K562 (cell line): ENCODE measurements at regions of chr12 and their contacts with region 1.

Region 1: DNA sequence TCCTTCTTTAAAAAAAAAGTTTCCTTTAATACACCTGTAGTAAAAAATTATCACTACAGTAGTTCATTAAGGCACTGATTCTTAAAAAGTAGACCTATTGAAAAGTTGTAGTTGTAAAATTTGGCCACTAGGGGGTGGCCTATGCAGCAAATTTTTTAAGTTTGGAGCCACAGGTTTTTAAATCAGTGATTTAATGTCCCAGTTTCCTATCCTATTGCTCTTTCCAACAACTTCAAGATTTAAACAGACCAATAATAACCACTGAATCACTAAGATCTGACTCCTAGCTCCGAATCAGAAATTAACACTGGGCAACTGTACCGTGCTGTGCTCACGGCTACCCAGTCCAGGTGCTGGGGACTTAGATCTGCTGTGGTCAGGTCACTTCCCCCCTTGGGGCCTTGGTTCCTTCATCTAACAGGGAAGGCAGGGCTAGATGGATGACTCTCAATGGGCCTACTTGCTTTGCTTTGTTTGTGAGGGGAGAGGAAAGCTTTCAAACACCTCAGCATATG is 279.3 kb downstream of the MED13L start:
- DNase-seq: peak; percentile 31 to 53 (median 31)
- ATAC-seq: peak; percentile 50
- H3K4me3 ChIP-seq: no peak overlapping the region
- H3K27ac ChIP-seq: no peak overlapping the region
- H3K4me1 ChIP-seq: no peaks in the 10 kb centered on the region
- H3K27me3 ChIP-seq: no peaks in the 10 kb centered on the region
- CTCF ChIP-seq: peak; percentile 36 to 77 (median 60); a peak in 4 of 6 replicates
- EP300 ChIP-seq: no peak
- POLR2A ChIP-seq: no peak
- RAD21 ChIP-seq: peak; percentile 60 to 65

Region 2: DNA sequence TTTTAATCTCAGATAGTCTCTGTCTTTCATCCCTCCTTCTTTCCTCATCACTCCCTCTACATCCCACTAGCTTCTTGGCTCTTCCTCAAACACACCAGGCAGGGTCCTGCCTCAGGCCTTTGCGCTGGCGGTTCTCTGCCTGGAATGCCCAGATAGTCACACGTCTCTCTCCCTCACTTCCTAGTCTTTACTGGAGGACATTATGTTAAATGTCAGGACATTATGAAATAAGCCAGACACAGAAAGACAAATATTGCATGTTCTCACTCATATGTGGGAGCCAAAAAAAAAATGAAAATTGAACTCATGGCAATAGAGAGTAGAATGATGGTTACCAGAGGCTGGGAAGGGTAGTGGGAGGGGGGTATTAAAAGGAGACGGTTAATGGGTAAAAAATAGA is 162.7 kb before region 1 on chr12:
- CTCF ChIA-PET with region 1: no interaction called
- POLR2A ChIA-PET with region 1: no interaction called
- in situ Hi-C with region 1: no loop called
- intact Hi-C with region 1: no loop called
- DNase-seq: no peak
- ATAC-seq: no peak
- H3K4me3 ChIP-seq: no peak overlapping the region
- H3K27ac ChIP-seq: no peak overlapping the region
- H3K4me1 ChIP-seq: no peaks in the 10 kb centered on the region
- H3K27me3 ChIP-seq: peaks cover 0 to 7% of the 10 kb centered on the region in 2 experiments; a peak in 2 of 5 replicates
- CTCF ChIP-seq: no peak
- EP300 ChIP-seq: no peak
- POLR2A ChIP-seq: no peak
- RAD21 ChIP-seq: no peak

Region 3: DNA sequence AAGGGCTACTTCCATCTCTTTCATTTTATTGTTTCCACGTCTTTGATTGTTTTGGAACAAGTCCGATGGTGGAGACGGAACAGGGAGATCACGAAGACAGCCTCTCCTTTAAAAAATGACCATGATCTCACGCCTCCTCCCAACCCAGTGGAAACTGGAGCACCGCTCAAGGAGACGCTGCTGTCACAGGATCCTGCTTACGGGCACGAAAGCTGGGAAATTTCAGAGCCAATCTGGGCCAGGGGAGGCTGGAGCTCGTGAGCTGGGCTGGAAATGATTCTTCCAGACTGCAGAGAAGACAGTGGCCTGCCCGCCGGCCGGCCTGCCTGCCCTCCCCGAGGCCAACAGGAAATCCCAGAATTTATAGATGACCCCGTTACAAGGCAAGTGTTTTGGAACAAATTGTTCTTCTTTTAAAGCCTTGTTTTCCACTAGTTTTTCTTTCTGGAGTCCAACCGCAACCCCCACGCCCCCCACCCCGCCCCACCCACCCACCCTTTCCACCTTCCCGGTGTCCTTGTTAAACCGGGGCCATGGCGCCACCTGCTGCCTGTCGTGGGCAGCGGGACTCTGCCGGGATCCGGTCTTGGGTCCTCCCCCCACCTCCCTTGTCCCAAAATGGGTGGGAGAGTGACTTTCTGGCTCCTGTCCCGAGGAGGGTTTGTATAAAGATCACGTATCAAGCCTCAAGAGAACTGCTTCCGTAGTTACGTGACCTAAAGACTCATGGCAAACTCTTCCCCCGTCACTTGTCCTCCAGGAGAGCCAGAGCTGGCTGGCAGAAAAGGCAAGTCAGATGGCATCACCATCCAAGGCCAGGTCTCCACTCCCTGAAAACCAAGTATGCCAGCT is 601.3 kb after region 1 on chr12:
- CTCF ChIA-PET with region 1: interaction called, 3 read pairs
- POLR2A ChIA-PET with region 1: no interaction called
- in situ Hi-C with region 1: no loop called
- intact Hi-C with region 1: loop called (anchors 10 kb)
- DNase-seq: peak; percentile 87 to 90 (median 89)
- ATAC-seq: peak; percentile 90
- H3K4me3 ChIP-seq: no peak overlapping the region
- H3K27ac ChIP-seq: peak overlapping the region; percentile 85
- H3K4me1 ChIP-seq: peaks cover 30 to 39% of the 10 kb centered on the region in 2 experiments
- H3K27me3 ChIP-seq: no peaks in the 10 kb centered on the region
- CTCF ChIP-seq: peak; percentile 65 to 71 (median 66)
- EP300 ChIP-seq: no peak
- POLR2A ChIP-seq: no peak
- RAD21 ChIP-seq: peak in 1 of 2 experiments; percentile 65; a peak in 3 of 4 replicates

Region 4: GRCh38 chr12:116687888-116688287 is 689.7 kb after region 1 on chr12:
- CTCF ChIA-PET with region 1: no interaction called
- POLR2A ChIA-PET with region 1: no interaction called
- in situ Hi-C with region 1: loop called (anchors 25 kb)
- intact Hi-C with region 1: no loop called
- DNase-seq: peak; percentile 55 to 67 (median 60)
- ATAC-seq: peak; percentile 97
- H3K4me3 ChIP-seq: no peak overlapping the region
- H3K27ac ChIP-seq: no peak overlapping the region
- H3K4me1 ChIP-seq: no peaks in the 10 kb centered on the region; a peak in 1 of 5 replicates
- H3K27me3 ChIP-seq: peaks cover 14 to 18% of the 10 kb centered on the region in 2 experiments; a peak in 3 of 5 replicates
- CTCF ChIP-seq: peak; percentile 57 to 77 (median 72)
- EP300 ChIP-seq: no peak
- POLR2A ChIP-seq: no peak
- RAD21 ChIP-seq: peak in 1 of 2 experiments; percentile 55; a peak in 2 of 4 replicates

Region 5: DNA sequence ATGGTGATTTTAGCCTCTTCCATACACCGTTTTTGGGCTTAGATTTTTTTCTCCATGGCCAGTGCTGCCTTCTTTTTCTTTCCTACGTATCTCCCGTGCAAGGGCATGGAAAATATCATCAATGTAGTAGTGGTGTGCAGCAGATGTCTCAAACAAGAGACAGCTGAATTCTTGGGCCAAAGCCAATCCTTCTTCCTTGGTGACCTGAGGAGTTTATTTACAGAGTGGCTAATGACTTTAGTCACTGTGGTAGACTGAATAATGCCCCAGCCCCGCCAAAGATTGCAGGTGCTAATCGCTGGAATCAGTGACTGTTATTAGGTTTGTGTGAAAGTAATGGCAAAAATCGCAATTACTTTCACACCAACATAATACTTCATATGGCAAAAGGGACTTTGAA is 1598.8 kb after region 1 on chr12:
- CTCF ChIA-PET with region 1: no interaction called
- POLR2A ChIA-PET with region 1: no interaction called
- in situ Hi-C with region 1: no loop called
- intact Hi-C with region 1: no loop called
- DNase-seq: no peak
- ATAC-seq: no peak
- H3K4me3 ChIP-seq: no peak overlapping the region
- H3K27ac ChIP-seq: no peak overlapping the region
- H3K4me1 ChIP-seq: no peaks in the 10 kb centered on the region
- H3K27me3 ChIP-seq: peaks cover 0 to 11% of the 10 kb centered on the region in 2 experiments; a peak in 2 of 5 replicates
- CTCF ChIP-seq: no peak
- EP300 ChIP-seq: no peak
- POLR2A ChIP-seq: no peak
- RAD21 ChIP-seq: no peak